Mammary epithelial cell (primary cell): ENCODE measurements at regions of chr4 and their contacts with region 1.

Region 1: GRCh38 chr4:2451821-2452785 is 16.8 kb upstream of the RNF4 start:
- DNase-seq: no peak
- H3K4me3 ChIP-seq: no peak overlapping the region
- H3K27ac ChIP-seq: no peak overlapping the region
- H3K4me1 ChIP-seq: no peaks in the 10 kb centered on the region
- H3K27me3 ChIP-seq: no peaks in the 10 kb centered on the region
- CTCF ChIP-seq: no peak

Region 2: GRCh38 chr4:2364654-2365053 is 87.4 kb before region 1 on chr4:
- CTCF ChIA-PET with region 1: no interaction called
- dilution Hi-C with region 1: loop called (anchors 5 kb)
- in situ Hi-C with region 1: no loop called
- intact Hi-C with region 1: no loop called
- DNase-seq: peak; percentile 14
- H3K4me3 ChIP-seq: peak overlapping the region; percentile 29 to 58 (median 48)
- H3K27ac ChIP-seq: no peak overlapping the region
- H3K4me1 ChIP-seq: peaks cover 11% of the 10 kb centered on the region
- H3K27me3 ChIP-seq: no peaks in the 10 kb centered on the region
- CTCF ChIP-seq: no peak